Colonic mucosa (tissue), 4 donors: ENCODE measurements at regions of chr21 and their contacts with region 1.

Region 1: DNA sequence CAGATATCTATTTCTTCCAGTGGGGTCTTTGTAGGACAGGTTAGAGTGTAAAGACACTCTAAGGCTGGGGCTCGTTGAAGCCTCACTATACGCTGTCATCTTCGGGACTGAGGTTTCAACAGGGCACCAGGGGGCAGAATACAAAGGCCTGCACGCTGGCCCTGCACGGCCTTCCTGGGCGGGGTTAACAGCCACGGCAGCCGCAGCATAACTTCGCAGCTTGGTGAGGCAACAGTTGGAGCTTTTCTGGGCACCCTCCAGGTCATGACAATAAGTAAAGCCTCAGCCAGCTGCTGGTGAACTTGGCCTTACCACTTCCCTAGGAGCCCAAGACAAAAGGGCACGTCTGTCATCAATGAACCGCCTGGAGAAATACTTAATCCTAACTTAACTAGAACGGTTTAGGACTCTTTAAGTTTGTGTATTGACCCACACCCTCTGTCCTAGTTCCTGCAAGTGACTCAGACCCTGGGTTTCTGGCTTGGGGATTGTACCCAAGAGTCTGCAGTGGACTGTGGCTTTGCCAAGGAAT is 2.3 kb upstream of the RUNX1 start:
- DNase-seq: peak; percentile 87
- H3K4me3 ChIP-seq: no peak overlapping the region
- H3K27ac ChIP-seq: peak overlapping the region; percentile 43
- H3K4me1 ChIP-seq: peaks cover 5% of the 10 kb centered on the region
- H3K27me3 ChIP-seq: no peaks in the 10 kb centered on the region
- CTCF ChIP-seq: peak; percentile 52

Region 2: GRCh38 chr21:34926803-34927467 is 124.4 kb before region 1 on chr21:
- intact Hi-C with region 1: no loop called
- DNase-seq: peak; percentile 65
- H3K4me3 ChIP-seq: no peak overlapping the region
- H3K27ac ChIP-seq: no peak overlapping the region
- H3K4me1 ChIP-seq: peaks cover 3% of the 10 kb centered on the region
- H3K27me3 ChIP-seq: no peaks in the 10 kb centered on the region
- CTCF ChIP-seq: no peak

Region 3: DNA sequence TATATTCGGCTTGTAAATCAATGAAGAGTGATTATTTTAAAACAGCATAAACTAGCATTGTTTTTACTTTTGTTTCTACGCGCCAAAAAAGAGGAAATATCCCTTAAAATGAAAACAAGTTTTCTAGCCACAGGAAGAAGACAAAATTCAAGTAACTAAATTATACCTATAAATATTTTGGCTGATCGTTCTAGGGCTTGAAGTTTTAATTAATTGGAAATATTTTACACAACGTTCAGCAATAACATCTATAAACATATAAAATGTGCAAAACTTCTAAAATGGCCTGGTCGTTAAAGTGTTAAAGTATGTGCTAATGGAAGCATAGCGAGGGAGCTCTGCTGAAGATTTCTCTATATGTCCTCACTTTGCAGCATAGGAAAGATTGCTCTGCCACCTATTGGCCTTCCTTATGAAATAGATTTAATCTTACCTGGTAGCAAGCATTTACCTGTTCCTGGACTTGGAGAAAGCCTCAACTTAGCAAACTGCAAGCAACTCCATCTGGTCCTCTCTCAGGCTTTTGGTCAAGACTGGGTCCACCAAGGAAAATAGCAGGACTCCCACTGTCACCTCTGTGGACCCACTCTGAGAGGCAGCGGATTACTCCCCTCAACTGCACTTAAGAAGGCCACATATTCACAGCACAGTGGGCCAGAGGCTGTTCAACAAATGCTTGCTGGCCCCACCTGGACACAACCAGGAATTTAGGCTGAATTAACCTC is 349.0 kb after region 1 on chr21:
- intact Hi-C with region 1: loop called (anchors 5 kb)
- DNase-seq: peak; percentile 50
- H3K4me3 ChIP-seq: no peak overlapping the region
- H3K27ac ChIP-seq: no peak overlapping the region
- H3K4me1 ChIP-seq: no peaks in the 10 kb centered on the region
- H3K27me3 ChIP-seq: no peaks in the 10 kb centered on the region
- CTCF ChIP-seq: peak; percentile 39

Region 4: GRCh38 chr21:35940074-35940927 is 888.9 kb after region 1 on chr21:
- intact Hi-C with region 1: loop called (anchors 10 kb)
- DNase-seq: peak; percentile 29
- H3K4me3 ChIP-seq: no peak overlapping the region
- H3K27ac ChIP-seq: no peak overlapping the region
- H3K4me1 ChIP-seq: no peaks in the 10 kb centered on the region
- H3K27me3 ChIP-seq: no peaks in the 10 kb centered on the region
- CTCF ChIP-seq: peak; percentile 62